ENCODE measurements at regions of chr4 and their contacts with region 1.

Region 1: GRCh38 chr4:142719854-142720541 is 126.1 kb downstream of the INPP4B start:
- DNase-seq: peak; percentile 58
- H3K4me3 Mint-ChIP-seq: no peak overlapping the region
- H3K27ac Mint-ChIP-seq: no peak overlapping the region
- H3K4me1 Mint-ChIP-seq: peaks cover 17% of the 10 kb centered on the region
- H3K27me3 Mint-ChIP-seq: no peaks in the 10 kb centered on the region
- CTCF ChIP-seq: peak; percentile 50

Region 2: GRCh38 chr4:141158219-141158618 is 1561.8 kb before region 1 on chr4:
- CTCF ChIA-PET with region 1: no interaction called
- POLR2A ChIA-PET with region 1: no interaction called
- intact Hi-C with region 1: loop called (anchors 1 kb)
- DNase-seq: peak; percentile 62
- H3K4me3 Mint-ChIP-seq: no peak overlapping the region
- H3K27ac Mint-ChIP-seq: no peak overlapping the region
- H3K4me1 Mint-ChIP-seq: peaks cover 6% of the 10 kb centered on the region
- H3K27me3 Mint-ChIP-seq: no peaks in the 10 kb centered on the region
- CTCF ChIP-seq: peak; percentile 69

Region 3: DNA sequence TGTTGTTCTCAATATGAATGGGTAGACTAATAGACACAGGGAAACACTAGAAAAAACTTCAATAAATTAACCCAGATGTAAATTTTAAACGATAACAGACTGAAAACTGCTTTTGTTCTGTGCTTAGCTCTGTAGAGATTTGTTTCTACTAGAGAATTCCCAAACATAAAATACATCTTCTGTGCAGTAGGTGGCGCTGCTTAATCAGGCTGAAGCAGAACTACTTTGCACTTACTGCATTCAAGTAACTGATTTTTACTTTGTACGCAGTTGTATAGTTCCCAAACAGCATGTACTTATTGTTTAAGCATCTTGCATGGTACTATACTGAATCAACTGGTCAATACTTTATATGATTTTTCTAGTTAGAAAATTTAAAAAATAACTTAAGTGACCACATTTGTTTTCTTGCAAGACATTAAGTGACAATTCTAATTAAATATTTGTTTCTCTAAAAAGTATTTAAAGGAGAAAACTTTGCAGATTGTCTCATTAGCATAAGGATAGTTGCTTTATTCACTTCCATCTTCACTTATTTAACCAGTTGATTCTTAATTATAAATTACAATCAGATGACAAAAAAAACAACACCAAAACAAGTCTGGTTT is 593.0 kb before region 1 on chr4:
- CTCF ChIA-PET with region 1: no interaction called
- POLR2A ChIA-PET with region 1: no interaction called
- intact Hi-C with region 1: loop called (anchors 1 kb)
- DNase-seq: peak; percentile 66
- H3K4me3 Mint-ChIP-seq: no peak overlapping the region
- H3K27ac Mint-ChIP-seq: no peak overlapping the region
- H3K4me1 Mint-ChIP-seq: peaks cover 7% of the 10 kb centered on the region
- H3K27me3 Mint-ChIP-seq: no peaks in the 10 kb centered on the region
- CTCF ChIP-seq: peak; percentile 79

Region 4: GRCh38 chr4:142282870-142283431 is 437.0 kb before region 1 on chr4:
- CTCF ChIA-PET with region 1: no interaction called
- POLR2A ChIA-PET with region 1: no interaction called
- intact Hi-C with region 1: loop called (anchors 1 kb)
- DNase-seq: peak; percentile 38
- H3K4me3 Mint-ChIP-seq: no peak overlapping the region
- H3K27ac Mint-ChIP-seq: no peak overlapping the region
- H3K4me1 Mint-ChIP-seq: no peaks in the 10 kb centered on the region
- H3K27me3 Mint-ChIP-seq: no peaks in the 10 kb centered on the region
- CTCF ChIP-seq: peak; percentile 22

Region 5: DNA sequence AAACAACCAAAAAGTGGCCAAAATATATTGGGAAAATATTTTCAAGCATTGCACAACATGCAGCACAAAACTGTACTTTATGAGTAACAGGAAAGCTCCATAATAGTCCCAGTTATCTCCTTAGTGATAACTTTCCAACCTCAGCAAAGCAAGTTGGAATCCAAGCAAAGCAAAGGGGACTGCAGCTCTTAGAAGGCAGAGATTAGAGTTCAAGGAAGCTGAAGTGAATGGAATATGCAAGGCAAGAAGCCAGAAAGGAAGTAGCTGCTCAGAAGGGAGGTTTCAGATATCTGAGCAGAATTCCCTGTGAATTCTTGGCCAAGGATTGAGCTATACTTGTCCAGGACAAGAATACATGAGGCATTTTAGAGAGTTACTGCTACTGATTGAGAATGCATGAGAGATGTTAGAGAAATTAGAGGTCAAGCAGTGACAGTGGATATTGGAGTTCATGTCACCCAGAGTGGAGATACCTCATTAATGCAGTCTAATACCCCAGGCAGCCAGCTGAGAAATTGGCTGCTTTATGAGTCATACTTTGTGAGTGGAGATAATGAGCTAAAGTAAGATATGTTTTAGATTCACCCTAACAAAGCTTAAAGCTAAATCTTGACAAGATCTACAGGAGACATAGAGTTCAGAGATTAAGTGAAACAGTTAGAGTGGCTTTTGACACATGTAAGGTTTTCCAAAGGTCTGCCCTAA is 23.3 kb after region 1 on chr4:
- CTCF ChIA-PET with region 1: no interaction called
- POLR2A ChIA-PET with region 1: no interaction called
- intact Hi-C with region 1: no loop called
- DNase-seq: peak; percentile 18
- H3K4me3 Mint-ChIP-seq: no peak overlapping the region
- H3K27ac Mint-ChIP-seq: peak overlapping the region; percentile 8
- H3K4me1 Mint-ChIP-seq: peaks cover 7% of the 10 kb centered on the region
- H3K27me3 Mint-ChIP-seq: no peaks in the 10 kb centered on the region
- CTCF ChIP-seq: no peak

Region 6: GRCh38 chr4:142840516-142841123 is 120.6 kb after region 1 on chr4:
- CTCF ChIA-PET with region 1: interaction called, 4 read pairs
- POLR2A ChIA-PET with region 1: no interaction called
- intact Hi-C with region 1: loop called (anchors 2 kb)
- DNase-seq: peak; percentile 51
- H3K4me3 Mint-ChIP-seq: no peak overlapping the region
- H3K27ac Mint-ChIP-seq: no peak overlapping the region
- H3K4me1 Mint-ChIP-seq: peaks cover 6% of the 10 kb centered on the region
- H3K27me3 Mint-ChIP-seq: no peaks in the 10 kb centered on the region
- CTCF ChIP-seq: peak; percentile 44

Measured in MCF 10A (cell line).